Endothelial cell of umbilical vein (primary cell): ENCODE measurements at regions of chr2 and their contacts with region 1.

Region 1: DNA sequence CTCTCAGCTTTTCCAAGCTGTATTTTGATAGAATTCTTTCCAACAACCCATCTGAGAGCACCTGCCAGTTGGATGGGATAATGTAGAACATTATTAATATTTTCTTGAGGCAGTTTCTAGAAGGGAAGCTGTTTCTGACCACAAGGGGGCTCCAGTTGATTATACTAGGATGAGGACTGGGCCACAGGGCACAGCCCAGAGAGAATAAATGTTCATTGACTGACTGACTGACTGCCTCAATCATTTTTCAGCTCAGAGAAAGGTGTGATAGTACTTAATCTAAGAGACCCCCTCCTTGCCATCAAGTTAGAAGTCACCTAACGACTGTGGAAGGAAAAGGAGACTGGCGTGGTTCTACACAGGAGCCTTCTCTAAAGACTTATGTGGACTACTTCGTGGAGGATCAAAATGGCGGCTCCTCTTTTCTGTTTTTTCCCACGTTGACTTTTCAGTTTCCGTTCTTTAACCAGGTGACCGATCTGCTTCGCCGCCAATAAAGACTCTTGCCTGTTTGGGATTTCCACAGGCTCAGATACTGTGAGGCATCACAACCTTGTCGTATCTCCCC is 31.9 kb upstream of the CREG2 start:
- DNase-seq: peak; percentile 69
- H3K4me3 ChIP-seq: no peak overlapping the region
- H3K27ac ChIP-seq: no peak overlapping the region
- H3K4me1 ChIP-seq: no peaks in the 10 kb centered on the region
- H3K27me3 ChIP-seq: no peaks in the 10 kb centered on the region
- CTCF ChIP-seq: peak; percentile 59 to 63
- POLR2A ChIP-seq: no peak

Region 2: GRCh38 chr2:101349893-101350662 is 69.1 kb before region 1 on chr2:
- CTCF ChIA-PET with region 1: interaction called, 10 read pairs
- POLR2A ChIA-PET with region 1: no interaction called
- dilution Hi-C with region 1: no loop called
- intact Hi-C with region 1: no loop called
- DNase-seq: no peak
- H3K4me3 ChIP-seq: no peak overlapping the region
- H3K27ac ChIP-seq: no peak overlapping the region
- H3K4me1 ChIP-seq: no peaks in the 10 kb centered on the region
- H3K27me3 ChIP-seq: no peaks in the 10 kb centered on the region
- CTCF ChIP-seq: peak; percentile 10 to 33
- POLR2A ChIP-seq: no peak

Region 3: GRCh38 chr2:101387151-101387807 is 31.9 kb before region 1 on chr2 and contains the start of gene CREG2:
- CTCF ChIA-PET with region 1: interaction called, 11 read pairs
- POLR2A ChIA-PET with region 1: no interaction called
- dilution Hi-C with region 1: no loop called
- intact Hi-C with region 1: no loop called
- DNase-seq: peak; percentile 74
- H3K4me3 ChIP-seq: peak within 1 kb of the TSS; percentile 32 to 54 (median 43)
- H3K27ac ChIP-seq: no peak within 1 kb of the TSS
- H3K4me1 ChIP-seq: peaks cover 19% of the 10 kb centered on the region
- H3K27me3 ChIP-seq: peaks cover 36 to 46% of the 10 kb centered on the region in 2 experiments
- CTCF ChIP-seq: peak; percentile 53 to 61
- POLR2A ChIP-seq: no peak
- total RNA-seq, gene CREG2: 0.88 and 2.0 TPM in 2 replicates

Region 4: GRCh38 chr2:101473911-101474701 is 54.9 kb after region 1 on chr2:
- CTCF ChIA-PET with region 1: no interaction called
- POLR2A ChIA-PET with region 1: no interaction called
- dilution Hi-C with region 1: no loop called
- intact Hi-C with region 1: no loop called
- DNase-seq: no peak
- H3K4me3 ChIP-seq: peak overlapping the region; percentile 9 to 12 (median 10)
- H3K27ac ChIP-seq: peak overlapping the region; percentile 36
- H3K4me1 ChIP-seq: peaks cover 7% of the 10 kb centered on the region
- H3K27me3 ChIP-seq: no peaks in the 10 kb centered on the region
- CTCF ChIP-seq: no peak
- POLR2A ChIP-seq: peak; percentile 60

Region 5: GRCh38 chr2:101697124-101698013 is 278.2 kb after region 1 on chr2 and contains the start of gene MAP4K4:
- CTCF ChIA-PET with region 1: interaction called, 17 read pairs
- POLR2A ChIA-PET with region 1: no interaction called
- dilution Hi-C with region 1: no loop called
- intact Hi-C with region 1: loop called (anchors 1 kb)
- DNase-seq: peak; percentile 67
- H3K4me3 ChIP-seq: peak within 1 kb of the TSS; percentile 55 to 98 (median 96)
- H3K27ac ChIP-seq: peak within 1 kb of the TSS; percentile 85
- H3K4me1 ChIP-seq: peaks cover 20% of the 10 kb centered on the region
- H3K27me3 ChIP-seq: no peaks in the 10 kb centered on the region
- CTCF ChIP-seq: peak in 1 of 2 donors; percentile 11
- POLR2A ChIP-seq: peak; percentile 88
- total RNA-seq, gene MAP4K4: 251 and 269 TPM in 2 replicates

Region 6: DNA sequence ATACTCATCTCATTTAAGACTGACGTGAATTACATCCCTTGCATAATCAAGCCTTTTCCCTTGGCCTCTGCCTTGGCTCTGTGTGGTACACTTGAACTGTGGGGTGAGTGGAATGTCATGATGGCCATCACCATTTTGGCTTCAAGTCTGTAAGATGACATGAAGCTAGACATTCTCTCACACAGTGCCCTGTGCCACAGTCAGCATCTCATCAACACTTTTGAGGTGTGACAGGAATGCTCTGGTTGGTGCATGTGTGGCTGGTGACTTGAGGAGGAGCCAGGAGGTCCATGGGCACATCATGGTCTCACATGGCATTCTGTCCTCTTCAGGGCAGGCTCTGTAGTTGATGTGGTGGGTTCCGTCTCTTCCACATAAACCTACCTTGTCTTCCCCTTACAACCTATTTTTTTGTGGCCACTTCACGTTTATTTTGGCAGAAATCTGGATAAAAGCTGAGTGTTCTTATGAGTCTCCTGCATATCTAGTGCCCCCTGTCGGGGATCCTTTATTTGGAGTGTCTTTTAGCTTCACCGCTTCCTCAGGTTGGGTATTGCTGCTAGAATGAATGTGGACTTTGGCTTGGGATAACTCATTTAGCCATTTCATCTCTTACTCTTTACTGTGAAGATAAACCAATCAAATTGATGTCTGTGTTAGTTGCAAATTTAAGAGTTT is 306.5 kb after region 1 on chr2:
- CTCF ChIA-PET with region 1: interaction called, 16 read pairs
- POLR2A ChIA-PET with region 1: no interaction called
- dilution Hi-C with region 1: no loop called
- intact Hi-C with region 1: no loop called
- DNase-seq: no peak
- H3K4me3 ChIP-seq: no peak overlapping the region
- H3K27ac ChIP-seq: no peak overlapping the region
- H3K4me1 ChIP-seq: peaks cover 3% of the 10 kb centered on the region
- H3K27me3 ChIP-seq: no peaks in the 10 kb centered on the region
- CTCF ChIP-seq: peak in 1 of 2 donors; percentile 10
- POLR2A ChIP-seq: no peak

Region 7: DNA sequence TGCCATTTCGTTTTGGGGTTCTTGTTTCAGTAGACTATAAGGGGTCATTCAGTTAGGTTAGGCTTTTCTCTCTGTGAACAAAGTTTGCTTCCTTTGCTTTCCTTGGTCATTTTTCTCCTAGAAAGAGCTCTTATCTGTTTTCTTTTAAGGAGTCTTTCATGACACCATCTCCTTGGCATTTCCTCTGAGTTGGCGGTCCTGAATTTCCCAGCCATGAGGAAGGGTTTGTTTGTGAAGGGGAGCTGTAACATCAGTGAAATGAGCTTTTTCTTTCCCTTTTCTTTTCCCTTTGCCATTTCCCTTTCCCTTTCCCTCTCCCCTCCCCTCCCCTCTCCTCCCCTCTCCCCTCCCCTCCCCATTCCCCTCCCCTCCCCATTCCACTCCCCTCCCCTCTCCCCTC is 340.0 kb after region 1 on chr2:
- CTCF ChIA-PET with region 1: interaction called, 17 read pairs
- POLR2A ChIA-PET with region 1: no interaction called
- dilution Hi-C with region 1: no loop called
- intact Hi-C with region 1: no loop called
- DNase-seq: peak; percentile 95
- H3K4me3 ChIP-seq: no peak overlapping the region
- H3K27ac ChIP-seq: peak overlapping the region; percentile 73
- H3K4me1 ChIP-seq: peaks cover 41% of the 10 kb centered on the region
- H3K27me3 ChIP-seq: no peaks in the 10 kb centered on the region
- CTCF ChIP-seq: no peak
- POLR2A ChIP-seq: no peak

Region 8: GRCh38 chr2:101823347-101823791 is 404.2 kb after region 1 on chr2:
- CTCF ChIA-PET with region 1: interaction called, 63 read pairs
- POLR2A ChIA-PET with region 1: no interaction called
- dilution Hi-C with region 1: no loop called
- intact Hi-C with region 1: no loop called
- DNase-seq: peak; percentile 79
- H3K4me3 ChIP-seq: no peak overlapping the region
- H3K27ac ChIP-seq: peak overlapping the region; percentile 30
- H3K4me1 ChIP-seq: peaks cover 54% of the 10 kb centered on the region
- H3K27me3 ChIP-seq: no peaks in the 10 kb centered on the region
- CTCF ChIP-seq: peak; percentile 54 to 67
- POLR2A ChIP-seq: no peak